Cardiac septum (tissue), 1 donor: ENCODE measurements at regions of chr16 and their contacts with region 1.

Region 1: GRCh38 chr16:14309001-14309886 is 238.1 kb downstream of the MRTFB start:
- DNase-seq: no peak

Region 2: DNA sequence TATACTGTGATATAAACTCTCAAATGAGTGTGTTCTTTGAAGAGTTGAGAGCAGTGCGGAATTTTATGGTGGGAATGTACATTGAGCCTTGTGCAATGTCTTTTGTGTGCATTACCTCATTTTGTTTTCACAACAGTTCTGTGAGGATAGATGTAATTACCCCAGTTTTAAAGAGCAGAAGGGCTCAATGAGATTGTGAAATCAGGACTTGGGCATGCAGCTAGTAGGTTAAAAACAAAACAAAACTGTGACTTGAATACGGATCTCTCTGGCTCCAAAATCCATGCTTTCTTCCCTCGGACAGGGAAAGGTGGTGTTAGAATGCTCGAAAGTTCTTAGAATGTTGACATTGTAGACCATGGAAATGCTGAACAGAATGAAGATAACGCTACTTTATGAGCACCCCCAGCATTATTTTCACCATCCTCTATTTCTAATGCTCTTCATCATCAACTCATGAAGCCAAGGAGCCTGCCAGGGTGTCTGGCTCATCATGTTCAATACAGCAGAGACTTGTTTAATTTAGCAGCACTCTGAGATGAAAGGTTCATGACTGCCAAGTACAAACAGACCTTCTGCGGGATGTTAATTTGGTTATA is 221.0 kb before region 1 on chr16:
- intact Hi-C with region 1: no loop called
- DNase-seq: no peak

Region 3: DNA sequence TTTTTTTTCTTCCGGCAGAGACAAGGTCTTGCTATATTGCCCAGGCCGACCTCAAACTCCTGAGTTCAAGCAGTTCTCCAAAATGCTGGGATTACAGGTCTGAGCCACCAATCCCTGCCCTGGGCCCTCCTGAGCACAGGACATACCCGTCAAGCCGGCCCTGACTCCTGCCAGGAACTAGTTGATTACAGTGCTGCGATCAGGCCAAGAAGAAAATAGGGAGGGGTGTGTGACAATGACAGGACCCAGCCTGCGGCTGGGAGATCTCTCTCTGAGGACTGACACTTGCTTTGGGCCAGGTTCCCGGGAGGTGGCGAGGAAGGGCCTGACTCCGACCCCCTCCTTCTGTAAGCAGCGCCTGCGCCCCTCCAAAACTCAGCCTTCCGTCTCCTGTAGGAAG is 38.5 kb after region 1 on chr16:
- intact Hi-C with region 1: loop called (anchors 5 kb)
- DNase-seq: peak; percentile 78